GM12878 (cell line): ENCODE measurements at regions of chr17 and their contacts with region 1.

Region 1: DNA sequence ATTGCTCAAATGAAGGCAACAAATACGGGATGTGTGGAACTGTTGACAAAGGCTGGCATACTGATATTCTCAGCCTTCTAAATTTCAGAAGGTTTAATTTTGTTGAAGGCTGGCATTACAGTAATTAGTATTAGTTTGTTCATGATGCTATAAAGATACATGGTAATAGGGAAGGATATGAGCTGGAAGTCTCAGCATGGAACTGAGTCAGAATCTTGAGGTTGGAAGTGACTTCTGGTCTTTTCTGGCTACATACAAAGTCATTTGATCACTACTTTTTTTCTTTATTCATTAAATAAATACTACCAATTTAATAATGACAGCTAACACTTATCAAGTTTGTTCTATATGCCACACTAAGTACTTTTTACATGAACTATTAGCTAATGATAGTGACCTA is 22.6 kb downstream of the RABEP1 start:
- DNase-seq: no peak
- ATAC-seq: no peak
- H3K4me3 ChIP-seq: no peak overlapping the region
- H3K27ac ChIP-seq: no peak overlapping the region
- H3K4me1 ChIP-seq: peaks cover 32% of the 10 kb centered on the region
- H3K27me3 ChIP-seq: no peaks in the 10 kb centered on the region
- CTCF ChIP-seq: no peak
- EP300 ChIP-seq: no peak
- POLR2A ChIP-seq: no peak
- RAD21 ChIP-seq: no peak

Region 2: DNA sequence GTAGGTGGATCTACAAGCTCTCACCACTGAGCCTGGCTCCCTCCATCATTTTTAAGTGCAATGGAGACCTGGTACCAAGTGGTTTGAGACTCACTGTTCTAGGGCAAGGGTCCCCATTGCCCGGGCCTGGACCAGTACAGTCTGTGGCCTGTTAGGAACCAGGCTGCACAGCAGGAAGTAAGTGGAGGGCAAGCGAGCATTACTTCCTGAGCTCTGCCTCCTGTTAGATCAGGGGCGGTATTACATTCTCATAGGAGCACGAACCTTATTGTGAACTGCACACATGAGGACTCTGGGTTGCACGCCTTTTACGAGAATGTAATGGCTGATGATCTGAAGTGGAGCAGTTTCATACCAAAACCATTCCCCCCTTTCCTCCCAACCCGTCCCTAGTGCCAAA is 106.2 kb before region 1 on chr17:
- CTCF ChIA-PET with region 1: interaction called, 9 read pairs
- POLR2A ChIA-PET with region 1: no interaction called
- RAD21 ChIA-PET with region 1: interaction called, 10 read pairs
- SMC1A ChIA-PET with region 1: interaction called, 4 read pairs
- in situ Hi-C with region 1: no loop called
- intact Hi-C with region 1: loop called (anchors 5 kb)
- DNase-seq: no peak
- ATAC-seq: peak; percentile 69
- H3K4me3 ChIP-seq: no peak overlapping the region
- H3K27ac ChIP-seq: peak overlapping the region; percentile 89
- H3K4me1 ChIP-seq: peaks cover 31% of the 10 kb centered on the region
- H3K27me3 ChIP-seq: no peaks in the 10 kb centered on the region
- CTCF ChIP-seq: no peak; a peak in 1 of 6 replicates
- EP300 ChIP-seq: no peak
- POLR2A ChIP-seq: peak; percentile 27; the same call in 1 of the 2 replicates
- RAD21 ChIP-seq: no peak

Region 3: GRCh38 chr17:5249615-5250014 is 55.0 kb before region 1 on chr17:
- CTCF ChIA-PET with region 1: interaction called, 43 read pairs
- POLR2A ChIA-PET with region 1: interaction called, 4 read pairs
- RAD21 ChIA-PET with region 1: interaction called, 5 read pairs
- SMC1A ChIA-PET with region 1: interaction called, 14 read pairs
- in situ Hi-C with region 1: no loop called
- intact Hi-C with region 1: loop called (anchors 1 kb)
- DNase-seq: no peak
- ATAC-seq: peak; percentile 95
- H3K4me3 ChIP-seq: no peak overlapping the region
- H3K27ac ChIP-seq: no peak overlapping the region
- H3K4me1 ChIP-seq: peaks cover 9% of the 10 kb centered on the region
- H3K27me3 ChIP-seq: no peaks in the 10 kb centered on the region
- CTCF ChIP-seq: peak; percentile 51 to 69 (median 67)
- EP300 ChIP-seq: no peak
- POLR2A ChIP-seq: no peak
- RAD21 ChIP-seq: peak; percentile 82

Region 4: GRCh38 chr17:5254903-5255526 is 49.6 kb before region 1 on chr17:
- CTCF ChIA-PET with region 1: interaction called, 43 read pairs
- POLR2A ChIA-PET with region 1: interaction called, 4 read pairs
- RAD21 ChIA-PET with region 1: interaction called, 5 read pairs
- SMC1A ChIA-PET with region 1: interaction called, 14 read pairs
- in situ Hi-C with region 1: no loop called
- intact Hi-C with region 1: no loop called
- DNase-seq: no peak
- ATAC-seq: peak; percentile 74
- H3K4me3 ChIP-seq: peak overlapping the region; percentile 32
- H3K27ac ChIP-seq: peak overlapping the region; percentile 7
- H3K4me1 ChIP-seq: peaks cover 17% of the 10 kb centered on the region
- H3K27me3 ChIP-seq: no peaks in the 10 kb centered on the region
- CTCF ChIP-seq: no peak
- EP300 ChIP-seq: no peak
- POLR2A ChIP-seq: no peak
- RAD21 ChIP-seq: no peak

Region 5: DNA sequence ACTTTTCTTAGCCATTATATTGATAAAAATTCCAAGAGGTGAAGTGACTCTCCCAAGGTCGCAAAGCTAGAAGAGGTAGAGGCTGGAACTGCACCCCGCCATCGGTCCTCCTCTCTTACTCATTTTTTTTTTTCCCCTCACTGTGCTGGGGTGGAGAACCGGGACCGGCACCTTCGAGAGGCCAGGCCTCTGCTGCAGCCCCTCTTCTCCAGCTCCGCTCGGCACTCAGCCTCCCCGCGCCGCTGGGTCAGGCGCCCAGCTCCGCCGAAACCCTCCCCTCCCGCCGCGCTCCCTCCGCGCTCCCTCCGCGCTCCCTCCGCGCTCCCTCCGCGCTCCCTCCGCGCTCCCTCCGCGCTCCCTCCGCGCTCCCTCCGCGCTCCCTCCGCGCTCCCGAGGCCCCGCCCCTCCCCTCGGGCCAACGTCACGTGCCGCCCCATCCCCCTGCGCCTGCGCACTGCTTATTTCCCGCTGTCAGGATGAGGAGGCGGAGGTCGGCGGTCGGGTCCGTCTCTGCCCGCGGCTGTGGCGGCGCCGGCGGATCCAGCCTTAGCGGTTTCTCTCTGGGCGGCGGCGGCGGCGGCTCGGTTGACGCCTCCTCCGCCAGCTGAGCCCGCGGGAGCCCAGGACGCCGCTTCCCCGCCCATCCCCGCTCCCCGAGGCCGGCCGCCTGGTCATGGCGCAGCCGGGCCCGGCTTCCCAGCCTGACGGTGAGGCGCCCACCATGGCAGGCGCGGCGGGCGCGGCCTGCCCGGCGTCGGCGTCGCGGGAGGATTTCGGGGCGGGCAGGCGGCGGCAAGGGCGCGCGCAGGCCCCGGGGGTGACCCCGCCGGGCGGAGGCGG is 22.6 kb before region 1 on chr17 and contains the start of gene RABEP1:
- CTCF ChIA-PET with region 1: interaction called, 23 read pairs
- POLR2A ChIA-PET with region 1: interaction called, 45 read pairs
- RAD21 ChIA-PET with region 1: interaction called, 4 read pairs
- SMC1A ChIA-PET with region 1: interaction called, 65 read pairs
- in situ Hi-C with region 1: no loop called
- intact Hi-C with region 1: no loop called
- DNase-seq: peak; percentile 46
- ATAC-seq: peak; percentile 80
- H3K4me3 ChIP-seq: peak within 1 kb of the TSS; percentile 79
- H3K27ac ChIP-seq: peak within 1 kb of the TSS; percentile 78
- H3K4me1 ChIP-seq: peaks cover 14% of the 10 kb centered on the region
- H3K27me3 ChIP-seq: no peaks in the 10 kb centered on the region
- CTCF ChIP-seq: peak in 2 of 3 experiments; percentile 11 to 27; a peak in 2 of 6 replicates
- EP300 ChIP-seq: no peak
- POLR2A ChIP-seq: peak; percentile 97
- RAD21 ChIP-seq: no peak
- polyA plus RNA-seq, gene RABEP1: 13.4 to 20.2 TPM